Activated CD8-positive, alpha-beta T cell treated with anti-CD3 and anti-CD28 coated beads for 36 hours (primary cell): ENCODE measurements at regions of chr7 and their contacts with region 1.

Region 1: DNA sequence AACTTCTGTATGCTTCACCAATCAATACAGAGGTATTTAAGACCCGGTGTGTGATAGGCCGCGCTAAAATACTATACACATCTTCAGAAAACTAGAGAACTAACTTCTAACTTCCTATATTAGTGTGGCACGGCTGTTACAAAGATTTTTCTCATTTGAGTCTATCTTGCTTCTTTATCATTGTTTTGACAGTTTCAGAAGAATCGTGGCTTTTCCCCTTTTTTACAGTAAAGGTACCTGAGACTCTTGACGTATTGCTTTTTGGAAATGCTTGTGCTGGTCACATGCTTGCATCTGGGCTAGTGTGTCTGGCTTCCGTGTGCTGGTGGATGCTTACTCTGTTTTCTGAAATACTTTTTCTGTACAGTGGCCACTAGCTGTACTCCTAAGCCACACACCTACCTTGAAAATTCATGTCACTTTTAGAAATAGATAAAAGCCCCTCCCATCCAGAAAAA is 12.7 kb downstream of the IKZF1 start:
- DNase-seq: peak; percentile 75
- ATAC-seq: peak; percentile 82
- H3K4me3 Mint-ChIP-seq: peak overlapping the region; percentile 94
- H3K27ac Mint-ChIP-seq: peak overlapping the region; percentile 97
- H3K4me1 Mint-ChIP-seq: peaks cover 88% of the 10 kb centered on the region
- H3K27me3 Mint-ChIP-seq: no peaks in the 10 kb centered on the region
- CTCF ChIP-seq: peak; percentile 7

Region 2: DNA sequence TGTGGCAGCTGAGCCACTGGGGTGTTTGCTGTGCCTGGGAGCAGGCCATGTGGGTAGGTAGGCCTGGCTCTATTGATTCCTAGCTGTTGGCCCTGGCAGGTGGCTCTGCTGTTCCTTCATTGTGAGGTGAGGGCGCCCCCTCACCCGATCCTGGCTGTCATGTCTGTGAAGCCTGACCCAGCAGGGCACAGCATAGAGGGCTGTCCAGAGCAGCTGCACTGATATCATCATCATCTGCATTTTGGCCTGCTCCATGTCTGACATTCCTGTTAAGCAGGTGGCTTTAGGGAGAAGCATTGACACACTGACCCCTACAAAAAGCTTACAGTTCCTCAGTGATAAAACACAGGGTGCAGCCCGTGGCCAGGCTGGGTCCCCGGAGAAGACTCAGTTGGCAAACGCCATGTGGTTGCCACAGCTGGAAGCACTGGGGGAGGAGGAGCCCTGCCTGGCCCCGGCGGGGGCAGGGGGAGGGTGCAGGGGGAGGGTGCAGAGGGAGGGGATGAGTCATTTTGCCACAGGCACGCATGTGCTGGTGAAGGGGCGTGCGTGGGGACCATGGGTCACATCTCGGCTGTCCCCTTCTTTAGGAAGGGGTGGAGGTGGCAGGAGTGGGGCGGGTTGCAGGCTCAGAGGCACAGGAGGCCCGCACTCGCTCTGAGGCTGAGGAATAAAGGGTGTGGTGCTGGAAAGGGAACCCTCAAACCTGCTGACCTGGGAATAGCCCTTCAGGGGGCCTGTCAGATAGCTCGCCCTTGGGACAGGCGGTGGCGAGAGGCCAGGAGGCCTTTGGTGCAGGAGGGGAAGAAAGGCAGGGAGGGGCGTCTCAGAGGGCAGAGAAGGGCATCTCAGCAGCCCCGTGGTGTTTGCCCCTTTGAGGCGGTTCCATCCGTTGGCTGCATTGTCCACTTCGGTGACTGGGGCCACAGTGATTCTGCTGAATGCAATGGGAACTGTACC is 18.8 kb after region 1 on chr7:
- CTCF ChIA-PET with region 1: interaction called, 37 read pairs
- POLR2A ChIA-PET with region 1: interaction called, 1,646 read pairs
- intact Hi-C with region 1: loop called (anchors 2 kb)
- DNase-seq: peak; percentile 93
- ATAC-seq: peak; percentile 53
- H3K4me3 Mint-ChIP-seq: no peak overlapping the region
- H3K27ac Mint-ChIP-seq: no peak overlapping the region
- H3K4me1 Mint-ChIP-seq: peaks cover 21% of the 10 kb centered on the region
- H3K27me3 Mint-ChIP-seq: no peaks in the 10 kb centered on the region
- CTCF ChIP-seq: no peak

Region 3: GRCh38 chr7:50456371-50457123 is 139.3 kb after region 1 on chr7:
- CTCF ChIA-PET with region 1: no interaction called
- POLR2A ChIA-PET with region 1: no interaction called
- intact Hi-C with region 1: no loop called
- DNase-seq: no peak
- ATAC-seq: no peak
- H3K4me3 Mint-ChIP-seq: no peak overlapping the region
- H3K27ac Mint-ChIP-seq: no peak overlapping the region
- H3K4me1 Mint-ChIP-seq: no peaks in the 10 kb centered on the region
- H3K27me3 Mint-ChIP-seq: no peaks in the 10 kb centered on the region
- CTCF ChIP-seq: no peak

Region 4: DNA sequence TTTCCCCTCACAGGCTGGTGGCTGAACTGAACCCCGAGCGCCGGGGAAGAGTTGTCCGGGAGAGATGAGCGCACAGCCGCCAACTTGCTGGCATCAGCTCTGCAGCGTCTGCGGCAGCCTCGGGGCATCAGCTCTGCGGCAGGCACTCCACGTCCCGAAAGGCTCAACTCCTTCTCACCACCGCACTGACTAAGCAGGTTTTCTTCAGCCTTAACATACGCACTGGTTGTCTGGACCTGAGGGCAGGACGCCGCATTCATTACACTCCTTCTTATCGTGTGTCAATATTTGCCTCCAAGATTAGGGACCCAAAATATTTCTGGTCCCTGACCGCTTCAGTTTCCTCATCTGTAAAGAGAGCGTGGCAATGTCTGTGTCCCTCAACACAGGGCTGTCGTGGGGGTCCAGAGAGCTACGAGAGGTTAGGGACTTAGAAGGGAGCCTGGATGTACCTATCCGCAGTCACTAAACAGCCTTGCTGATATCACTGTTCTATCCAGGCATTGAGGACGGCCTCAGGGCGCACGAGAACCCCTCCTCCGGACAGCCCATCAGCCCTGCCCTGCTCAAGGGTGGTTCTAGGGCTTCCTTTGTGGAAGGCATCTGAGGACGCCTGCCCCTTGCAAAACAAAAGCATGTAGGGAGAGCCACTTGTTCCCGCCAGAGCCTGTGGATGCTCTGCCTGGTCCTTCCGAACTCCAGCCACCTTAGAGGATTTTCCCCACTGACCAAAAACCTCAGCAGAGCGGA is 175.7 kb after region 1 on chr7:
- CTCF ChIA-PET with region 1: no interaction called
- POLR2A ChIA-PET with region 1: no interaction called
- intact Hi-C with region 1: no loop called
- DNase-seq: no peak
- ATAC-seq: no peak
- H3K4me3 Mint-ChIP-seq: no peak overlapping the region
- H3K27ac Mint-ChIP-seq: no peak overlapping the region
- H3K4me1 Mint-ChIP-seq: peaks cover 4% of the 10 kb centered on the region
- H3K27me3 Mint-ChIP-seq: peaks cover 7% of the 10 kb centered on the region
- CTCF ChIP-seq: no peak